ENCODE measurements at regions of chr2 and their contacts with region 1.

Region 1: DNA sequence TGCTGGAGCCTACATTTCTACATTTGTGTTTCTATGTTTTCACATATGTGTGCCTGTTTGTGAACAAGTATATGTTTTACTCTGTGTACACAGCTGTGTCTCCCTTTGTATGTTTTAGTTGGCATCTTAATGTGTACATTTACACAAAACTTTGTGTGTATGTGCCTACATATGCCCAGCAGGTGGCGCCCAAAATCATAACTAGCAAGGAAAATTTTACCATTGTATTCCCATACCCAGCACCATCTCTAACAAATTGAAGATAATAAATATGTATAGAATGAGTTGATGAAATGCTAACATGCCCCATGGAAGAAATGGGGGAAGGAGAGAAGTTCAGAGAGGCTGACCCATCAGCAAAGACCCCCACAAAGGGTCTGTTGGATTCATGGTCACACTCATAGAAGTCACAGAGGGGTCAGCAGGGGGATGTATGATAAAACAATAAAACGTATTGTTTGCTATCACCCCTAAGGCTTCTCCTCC is 48.1 kb downstream of the PKDCC start:
- DNase-seq: peak; percentile 82
- ATAC-seq: peak; percentile 19 to 43

Region 2: GRCh38 chr2:41933585-41934320 is 162.2 kb before region 1 on chr2:
- intact Hi-C with region 1: no loop called
- DNase-seq: peak; percentile 41
- ATAC-seq: peak; percentile 46 to 67

Region 3: DNA sequence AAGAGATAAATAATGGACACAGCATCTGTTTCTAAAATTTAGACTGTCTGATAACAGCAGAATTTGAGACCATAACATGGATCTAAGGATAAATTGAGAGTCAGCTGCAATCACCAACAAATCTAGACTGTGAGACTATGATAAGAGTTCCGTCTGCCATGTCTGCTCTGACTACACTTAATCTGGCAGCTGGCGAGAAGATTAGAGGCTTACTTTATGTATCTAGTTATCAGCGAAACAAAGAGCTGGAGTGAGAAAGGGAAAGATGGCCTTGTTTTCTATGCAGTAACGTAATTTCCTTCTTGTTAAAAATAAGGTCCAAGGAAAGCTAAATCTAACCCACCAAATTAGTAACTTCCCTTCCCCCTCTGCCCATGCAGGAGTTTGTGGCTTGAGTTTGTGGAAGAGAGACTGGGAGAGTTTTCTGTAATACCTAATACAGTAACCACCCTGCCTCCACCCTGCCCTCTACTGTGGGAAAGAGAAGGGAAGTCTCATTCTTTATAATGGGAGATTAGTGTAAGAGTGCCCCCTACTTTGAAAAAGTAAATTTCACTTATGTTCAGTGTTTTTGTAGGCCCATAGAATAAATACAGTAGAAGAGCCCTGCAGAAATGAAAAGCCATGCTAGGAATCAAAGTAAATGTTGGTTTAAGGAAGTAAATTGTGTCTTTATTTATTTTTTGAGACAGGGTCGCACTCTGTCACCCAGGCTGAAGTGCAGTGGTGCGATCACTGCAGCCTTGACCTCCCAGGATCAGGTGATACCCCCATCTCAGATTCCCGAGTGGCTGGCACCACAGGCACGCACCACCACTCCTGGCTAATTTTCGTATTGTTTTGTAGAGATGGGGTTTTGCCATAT is 100.7 kb after region 1 on chr2:
- intact Hi-C with region 1: loop called in 1 of 2 experiments (anchors 5 kb)
- DNase-seq: no peak
- ATAC-seq: peak; percentile 76 to 79

Region 4: GRCh38 chr2:42238644-42239288 is 142.8 kb after region 1 on chr2:
- intact Hi-C with region 1: loop called (anchors 2 to 5 kb)
- DNase-seq: peak; percentile 22
- ATAC-seq: peak; percentile 84

Region 5: DNA sequence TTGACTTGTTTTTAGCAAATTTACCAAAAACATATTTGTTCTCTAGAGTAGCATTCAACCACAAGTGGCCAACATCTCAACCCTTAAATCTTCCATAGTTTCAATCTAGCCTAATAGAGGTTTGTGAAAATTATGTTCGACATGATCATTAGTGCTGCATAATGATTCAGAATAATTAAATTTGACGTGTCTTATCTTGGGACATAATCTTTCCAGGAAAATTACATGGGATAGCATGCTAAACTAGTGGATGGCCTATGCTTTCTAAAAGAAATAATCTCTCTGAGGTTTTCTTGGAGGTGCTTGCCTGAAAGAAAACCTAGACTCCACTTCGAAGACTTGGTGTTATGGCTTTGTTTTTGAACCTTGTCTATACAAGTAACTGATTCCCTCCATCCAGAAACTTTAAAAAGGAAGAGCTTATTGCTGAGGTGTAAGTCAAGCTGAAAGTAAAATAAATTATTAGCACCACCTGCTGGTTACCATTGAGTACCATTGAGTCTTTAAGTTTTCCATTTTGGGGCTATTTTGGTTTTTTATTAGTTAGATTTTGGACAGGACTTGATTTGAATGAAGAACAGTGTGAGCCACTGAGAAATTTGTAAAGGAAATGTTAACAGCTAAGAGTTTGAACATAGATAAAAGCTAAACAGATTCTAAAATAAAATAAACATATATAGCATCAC is 232.3 kb after region 1 on chr2:
- intact Hi-C with region 1: loop called (anchors 5 to 10 kb)
- DNase-seq: no peak
- ATAC-seq: peak in 1 of 2 donors; percentile 21

Region 6: DNA sequence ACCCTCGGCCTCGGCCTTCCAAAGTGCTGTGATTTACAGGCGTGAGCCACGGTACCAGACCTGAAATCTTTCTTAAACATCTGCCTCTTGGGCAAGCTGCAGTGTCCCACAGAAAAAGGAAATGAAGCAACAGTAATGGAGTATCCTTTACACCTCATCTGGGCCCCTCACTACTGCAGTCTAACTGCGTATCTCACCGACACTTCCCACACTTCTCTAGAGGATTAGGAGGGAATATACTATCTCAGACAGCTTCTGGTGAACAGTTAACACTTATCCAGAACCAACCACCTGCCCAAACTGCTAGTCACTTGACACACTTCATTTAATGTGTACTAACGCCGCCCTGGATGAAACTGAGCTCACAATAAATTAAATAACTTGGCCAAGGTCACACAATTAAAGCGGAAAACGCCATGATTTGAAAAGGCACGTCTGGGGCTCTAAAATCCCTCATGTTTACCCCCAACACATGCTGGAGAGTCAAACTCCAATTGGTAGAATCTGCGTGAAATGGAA is 264.1 kb after region 1 on chr2:
- intact Hi-C with region 1: no loop called
- DNase-seq: no peak
- ATAC-seq: no peak